Activated naive CD4-positive, alpha-beta T cell treated with anti-CD3 and anti-CD28 coated beads for 36 hours (primary cell): ENCODE measurements at regions of chr6 and their contacts with region 1.

Region 1: DNA sequence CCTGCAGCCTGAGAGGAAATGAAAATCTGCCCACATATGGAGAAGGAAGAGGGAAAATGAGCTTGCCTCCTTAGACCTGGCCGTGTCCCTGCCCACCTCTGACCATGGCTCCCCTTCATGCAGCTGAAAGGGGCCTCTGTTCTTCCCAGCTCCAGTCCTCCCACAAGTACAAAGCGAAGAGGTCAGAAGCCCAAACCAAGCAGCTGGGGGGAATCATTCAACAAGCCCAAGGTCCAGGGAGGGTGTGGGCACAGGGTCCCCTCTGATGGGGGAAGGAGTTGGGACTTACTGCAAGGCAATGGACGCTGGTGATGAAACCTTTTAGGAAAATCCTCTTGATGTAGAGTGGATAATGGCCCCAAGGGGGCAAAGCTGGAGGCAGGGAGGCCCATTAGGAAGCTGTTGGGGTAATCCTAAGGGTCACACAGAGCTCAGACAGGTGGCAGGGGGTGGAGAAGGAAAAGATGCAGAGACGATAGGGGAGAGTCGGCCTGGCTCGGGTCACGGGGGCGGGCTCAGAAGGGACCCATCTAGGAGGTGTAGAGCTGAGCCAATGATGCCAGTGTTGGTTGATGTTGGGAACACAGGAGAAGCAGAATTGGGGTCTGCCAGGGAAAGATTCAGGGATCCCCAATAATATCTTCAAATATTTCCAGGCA is 16.1 kb upstream of the GRM4 start:
- DNase-seq: no peak
- H3K4me3 Mint-ChIP-seq: no peak overlapping the region
- H3K27ac Mint-ChIP-seq: no peak overlapping the region
- H3K4me1 Mint-ChIP-seq: peaks cover 2% of the 10 kb centered on the region
- H3K27me3 Mint-ChIP-seq: no peaks in the 10 kb centered on the region

Region 2: DNA sequence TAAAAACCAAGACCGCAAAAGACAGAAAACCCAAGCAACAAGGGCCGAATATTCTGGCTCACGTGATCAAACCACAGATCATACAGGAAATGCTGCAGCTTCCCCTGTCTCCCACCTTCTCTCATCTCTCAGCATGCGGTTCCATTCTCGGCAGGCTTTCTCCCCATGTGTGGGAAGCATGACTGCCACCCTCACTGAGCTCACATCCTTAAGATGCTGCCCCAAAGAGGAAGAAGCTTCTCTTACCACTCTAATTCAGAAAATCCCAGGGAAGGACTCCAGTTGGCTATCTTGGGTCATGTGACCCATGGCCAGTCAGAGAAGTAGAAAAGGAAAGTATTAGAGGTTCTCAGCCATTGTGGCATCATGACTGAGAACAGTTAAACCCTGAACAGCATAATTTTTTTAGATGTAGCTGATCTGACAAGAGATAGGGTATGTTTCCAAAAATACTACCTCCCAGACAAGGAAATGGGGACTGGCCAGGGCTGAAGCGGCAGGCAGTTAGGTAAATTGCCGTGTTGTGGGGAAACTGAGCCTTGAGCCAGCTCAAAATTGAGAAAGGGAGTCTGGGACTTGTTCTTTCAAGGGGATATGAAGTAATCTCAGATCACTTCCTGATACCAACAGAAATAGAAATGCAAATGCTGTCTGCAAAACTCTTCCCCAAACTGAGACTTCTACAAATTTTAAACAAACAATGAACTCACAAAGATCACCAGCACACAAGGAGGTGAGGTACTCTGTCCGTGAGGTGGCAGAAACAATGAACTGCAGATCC is 21.0 kb after region 1 on chr6:
- CTCF ChIA-PET with region 1: interaction called, 10 read pairs
- intact Hi-C with region 1: loop called (anchors 2 kb)
- DNase-seq: peak; percentile 83
- H3K4me3 Mint-ChIP-seq: peak overlapping the region; percentile 76
- H3K27ac Mint-ChIP-seq: peak overlapping the region; percentile 86
- H3K4me1 Mint-ChIP-seq: peaks cover 17% of the 10 kb centered on the region
- H3K27me3 Mint-ChIP-seq: no peaks in the 10 kb centered on the region

Region 3: DNA sequence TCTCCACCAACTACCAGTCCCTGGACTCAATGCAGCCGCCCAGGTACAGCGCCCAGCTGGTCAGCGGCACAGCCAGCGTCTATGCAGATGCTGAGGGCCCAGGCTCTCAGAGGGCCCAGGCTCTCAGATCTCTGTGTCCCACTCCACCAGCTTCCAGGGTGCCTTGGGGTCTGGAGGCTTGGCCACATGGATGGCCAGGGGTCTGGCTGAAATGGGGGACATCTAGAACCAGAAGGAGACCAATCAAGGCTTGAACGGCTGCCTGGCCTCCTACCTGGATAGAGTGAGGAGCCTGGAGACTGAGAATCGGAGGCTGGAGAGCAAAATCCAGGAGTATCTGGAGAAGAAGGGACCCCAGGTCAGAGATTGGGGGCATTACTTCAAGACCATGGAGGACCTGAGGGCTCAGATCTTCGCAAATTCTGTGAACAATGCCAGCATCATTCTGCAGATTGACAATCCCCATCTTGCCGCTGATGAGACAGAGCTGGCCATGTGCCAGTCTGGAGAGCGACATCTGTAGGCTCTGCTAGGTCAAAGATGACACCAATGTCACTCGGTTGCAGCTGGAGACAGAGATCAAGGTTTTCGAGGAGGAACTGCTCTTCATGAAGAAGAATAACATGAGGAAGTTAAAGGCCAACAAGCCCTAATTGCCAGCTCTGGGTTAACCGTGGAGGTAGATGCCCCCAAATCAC is 28.0 kb after region 1 on chr6:
- CTCF ChIA-PET with region 1: interaction called, 16 read pairs
- intact Hi-C with region 1: loop called (anchors 1 kb)
- DNase-seq: peak; percentile 77
- H3K4me3 Mint-ChIP-seq: no peak overlapping the region
- H3K27ac Mint-ChIP-seq: no peak overlapping the region
- H3K4me1 Mint-ChIP-seq: peaks cover 12% of the 10 kb centered on the region
- H3K27me3 Mint-ChIP-seq: no peaks in the 10 kb centered on the region

Region 4: DNA sequence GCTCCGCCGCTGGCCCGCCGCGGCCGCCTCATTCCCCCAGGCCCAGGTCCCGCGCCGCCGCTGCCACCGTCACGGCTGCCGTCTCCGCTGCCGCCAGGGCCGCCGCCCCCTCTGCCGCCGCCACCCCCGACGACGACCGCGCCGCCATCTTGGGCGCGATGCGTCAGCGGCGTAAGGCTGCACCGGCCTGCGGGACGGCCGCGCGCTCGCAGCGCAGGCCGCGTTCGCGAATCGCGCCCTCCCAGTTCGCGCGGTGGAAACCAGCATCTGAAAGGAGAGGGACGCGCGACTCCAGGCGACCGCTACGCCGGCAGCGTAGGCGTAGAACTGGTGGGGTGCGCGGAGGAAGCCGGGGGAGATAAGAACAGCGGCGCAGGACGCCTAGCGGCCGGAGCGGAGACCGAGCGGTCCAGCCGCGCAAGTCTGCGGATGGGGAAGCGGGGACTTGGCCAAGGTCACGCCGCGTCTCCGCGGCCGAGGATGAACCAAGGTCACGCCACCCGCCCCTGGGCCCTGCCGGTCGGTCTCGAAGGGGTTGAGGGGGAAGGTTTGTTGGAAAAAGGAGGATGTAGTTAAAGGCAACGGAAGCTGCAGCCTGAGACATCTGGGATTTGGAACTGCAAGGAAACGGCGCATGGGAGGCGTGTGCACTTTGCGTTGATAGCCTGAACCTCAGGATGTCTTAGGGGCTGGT is 230.7 kb after region 1 on chr6 and contains the start of gene NUDT3:
- CTCF ChIA-PET with region 1: interaction called, 3 read pairs
- intact Hi-C with region 1: loop called (anchors 2 kb)
- DNase-seq: peak; percentile 92
- H3K4me3 Mint-ChIP-seq: peak within 1 kb of the TSS; percentile 66
- H3K27ac Mint-ChIP-seq: peak within 1 kb of the TSS; percentile 88
- H3K4me1 Mint-ChIP-seq: peaks cover 27% of the 10 kb centered on the region
- H3K27me3 Mint-ChIP-seq: no peaks in the 10 kb centered on the region
- total RNA-seq, gene NUDT3: 14.0 to 14.3 TPM

Region 5: DNA sequence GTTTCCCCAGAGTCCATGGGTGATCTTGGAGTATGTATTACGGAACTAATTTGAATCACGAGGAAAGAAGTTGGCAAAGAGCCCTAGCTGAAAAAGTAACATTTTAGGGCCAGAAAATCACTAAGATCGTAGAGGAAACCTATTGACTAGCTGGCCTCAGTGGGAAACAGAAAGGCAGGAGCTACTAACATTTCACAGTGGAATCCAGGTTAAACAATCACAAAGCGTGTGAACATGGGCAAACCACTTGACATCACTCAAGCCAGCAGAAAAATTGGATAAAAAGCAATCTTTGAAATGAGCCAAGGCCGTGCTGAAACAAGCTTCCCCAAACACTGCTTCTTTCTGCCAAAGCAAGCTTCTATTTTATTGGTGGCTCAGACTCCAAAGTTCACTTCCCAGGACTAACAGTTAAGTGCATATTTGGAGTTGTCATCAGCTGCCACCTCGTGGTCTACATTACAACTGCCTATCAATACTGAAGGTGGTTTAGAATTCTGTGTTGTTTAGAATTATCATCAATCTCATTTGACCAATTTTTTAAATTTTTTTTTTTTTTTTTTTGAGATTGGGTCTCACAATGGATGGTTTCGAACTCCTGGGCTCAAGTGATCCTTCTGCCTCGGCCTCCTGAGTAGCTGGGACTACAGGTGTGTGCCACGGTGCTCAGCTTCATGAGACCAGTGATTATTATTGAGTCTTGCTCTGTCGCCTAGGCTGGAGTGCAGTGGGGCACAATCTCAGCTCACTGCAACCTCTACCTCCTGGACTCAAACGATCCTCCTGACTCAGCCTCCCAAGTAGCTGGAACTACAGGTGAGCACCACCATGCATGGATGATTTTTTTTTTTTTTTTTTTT is 253.2 kb after region 1 on chr6:
- CTCF ChIA-PET with region 1: interaction called, 17 read pairs
- intact Hi-C with region 1: no loop called
- DNase-seq: peak; percentile 46
- H3K4me3 Mint-ChIP-seq: no peak overlapping the region
- H3K27ac Mint-ChIP-seq: no peak overlapping the region
- H3K4me1 Mint-ChIP-seq: peaks cover 12% of the 10 kb centered on the region
- H3K27me3 Mint-ChIP-seq: no peaks in the 10 kb centered on the region

Region 6: GRCh38 chr6:34610819-34611477 is 449.0 kb after region 1 on chr6:
- CTCF ChIA-PET with region 1: interaction called, 10 read pairs
- intact Hi-C with region 1: loop called (anchors 1 kb)
- DNase-seq: no peak
- H3K4me3 Mint-ChIP-seq: no peak overlapping the region
- H3K27ac Mint-ChIP-seq: no peak overlapping the region
- H3K4me1 Mint-ChIP-seq: peaks cover 12% of the 10 kb centered on the region
- H3K27me3 Mint-ChIP-seq: no peaks in the 10 kb centered on the region